GM13977 (cell line): ENCODE measurements at regions of chr19 and their contacts with region 1.

Region 1: GRCh38 chr19:10380313-10381102 is at the start of gene TYK2:
- DNase-seq: peak; percentile 100
- CTCF ChIP-seq: no peak

Region 2: GRCh38 chr19:9945319-9945966 is 435.1 kb before region 1 on chr19:
- in situ Hi-C with region 1: loop called (anchors 10 kb)
- DNase-seq: no peak
- CTCF ChIP-seq: no peak